ENCODE measurements at regions of chr3 and their contacts with region 1.

Region 1: GRCh38 chr3:41574900-41575299 is 375.6 kb downstream of the CTNNB1 start:
- ATAC-seq: peak in 1 of 8 experiments; percentile 24
- H3K4me3 ChIP-seq: no peak overlapping the region
- H3K27ac ChIP-seq: no peak overlapping the region
- H3K4me1 ChIP-seq: peaks cover 0 to 5% of the 10 kb centered on the region in 2 donors

Region 2: GRCh38 chr3:41290736-41291135 is 284.2 kb before region 1 on chr3:
- in situ Hi-C with region 1: no loop called
- ATAC-seq: peak; percentile 26 to 98 (median 69)
- H3K4me3 ChIP-seq: no peak overlapping the region
- H3K27ac ChIP-seq: no peak overlapping the region
- H3K4me1 ChIP-seq: peaks cover 0 to 3% of the 10 kb centered on the region in 2 donors

Region 3: GRCh38 chr3:41362638-41363559 is 212.0 kb before region 1 on chr3:
- in situ Hi-C with region 1: loop called in 1 of 9 experiments (anchors 25 kb)
- ATAC-seq: peak; percentile 64 to 93 (median 90)
- H3K4me3 ChIP-seq: no peak overlapping the region
- H3K27ac ChIP-seq: peak overlapping the region; percentile 1 to 21
- H3K4me1 ChIP-seq: peaks cover 22 to 24% of the 10 kb centered on the region in 2 donors

Region 4: GRCh38 chr3:41405466-41405865 is 169.4 kb before region 1 on chr3:
- in situ Hi-C with region 1: no loop called
- ATAC-seq: peak in 1 of 8 experiments; percentile 37
- H3K4me3 ChIP-seq: no peak overlapping the region
- H3K27ac ChIP-seq: no peak overlapping the region
- H3K4me1 ChIP-seq: no peaks in the 10 kb centered on the region